Activated T-helper 1 cell treated with anti-CD3 and anti-CD28 coated beads, Interleukin-12 subunit alpha, Interleukin-12 subunit beta, Interleukin-2, Interleukin-4 antibody, amounts not matched to agents 30 ng/mL and 10 ng/mL and 1 ng/mL, durations not matched to agents 14 hours and 24 hours and 36 hours (primary cell): ENCODE measurements at regions of chr7 and their contacts with region 1.

Region 1: DNA sequence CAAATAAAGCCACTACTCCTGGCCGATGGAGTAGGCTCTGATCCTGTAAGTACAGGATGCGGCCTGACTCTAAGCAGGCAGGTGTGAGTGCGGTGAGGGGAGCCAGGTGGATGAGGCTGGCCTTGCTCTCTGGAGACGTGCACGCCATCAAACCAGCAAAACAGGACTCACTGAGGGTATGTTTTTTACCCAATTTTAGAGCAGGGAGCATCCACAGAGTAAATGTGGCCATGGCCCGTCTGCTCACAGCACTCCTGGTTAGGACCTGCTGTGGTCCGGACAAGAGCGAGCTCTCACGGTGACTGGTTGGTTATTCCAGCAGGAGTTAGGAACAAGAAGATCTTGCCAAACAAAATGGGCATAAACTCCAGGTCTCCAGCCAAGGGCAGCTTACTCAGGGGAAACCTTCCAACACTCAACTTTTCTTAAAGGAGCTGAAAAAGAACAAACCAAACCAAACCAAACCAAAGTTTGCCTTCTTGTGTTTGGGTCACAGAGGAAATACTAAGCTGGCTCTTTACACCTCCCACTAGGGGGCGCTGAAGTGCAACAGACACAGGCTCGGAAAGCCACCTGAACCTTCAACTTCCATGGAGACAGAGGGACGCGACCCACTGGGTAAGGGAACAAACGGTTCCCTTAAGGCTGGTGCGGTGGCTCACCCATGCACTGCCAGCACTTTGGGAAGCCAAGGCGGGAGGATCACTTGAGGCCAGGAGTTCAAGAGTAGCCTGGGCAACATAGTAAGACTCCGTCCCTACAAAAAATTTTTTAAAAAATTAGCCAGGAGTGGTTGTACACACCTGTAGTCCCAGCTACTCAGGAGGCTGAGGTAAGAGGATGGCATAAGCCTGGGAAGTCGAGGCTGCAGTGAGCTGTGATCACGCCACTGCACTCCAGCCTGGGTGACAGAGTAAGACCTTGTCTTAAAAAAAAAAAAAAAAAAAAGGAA is 122.4 kb downstream of the CLEC2L start:
- DNase-seq: peak; percentile 68
- H3K4me3 Mint-ChIP-seq: no peak overlapping the region
- H3K27ac Mint-ChIP-seq: no peak overlapping the region
- H3K4me1 Mint-ChIP-seq: peaks cover 65% of the 10 kb centered on the region
- H3K27me3 Mint-ChIP-seq: peaks cover 1% of the 10 kb centered on the region

Region 2: DNA sequence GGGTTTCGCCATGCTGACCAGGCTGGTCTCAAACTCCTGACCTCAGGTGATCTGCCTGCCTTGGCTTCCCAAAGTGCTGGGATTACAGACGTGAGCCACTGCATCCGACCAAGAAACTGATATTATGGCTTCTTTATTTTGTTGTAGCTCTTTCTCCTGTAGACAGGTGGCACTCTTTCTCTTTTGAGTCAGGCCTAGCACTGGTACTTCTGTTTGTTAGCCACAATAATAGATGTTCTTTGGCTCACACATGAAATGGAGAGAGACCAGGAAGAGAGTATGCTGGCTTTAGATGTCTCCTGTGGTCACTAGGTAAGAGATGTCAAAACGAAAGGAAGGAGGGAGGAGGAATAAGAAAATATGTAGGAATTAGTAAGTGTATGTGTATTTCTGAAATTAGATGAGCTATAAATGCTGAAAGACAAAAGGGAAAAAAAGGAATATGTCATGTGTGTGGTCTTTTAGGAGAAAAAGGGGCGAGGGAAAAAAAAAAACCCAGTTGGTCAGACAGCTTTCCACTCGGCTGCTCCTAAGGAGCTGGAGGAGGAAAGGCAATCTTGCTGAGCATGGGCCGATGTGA is 43.6 kb before region 1 on chr7:
- intact Hi-C with region 1: loop called (anchors 1 kb)
- DNase-seq: no peak
- H3K4me3 Mint-ChIP-seq: no peak overlapping the region
- H3K27ac Mint-ChIP-seq: no peak overlapping the region
- H3K4me1 Mint-ChIP-seq: no peaks in the 10 kb centered on the region
- H3K27me3 Mint-ChIP-seq: no peaks in the 10 kb centered on the region

Region 3: GRCh38 chr7:139673230-139673629 is 27.4 kb after region 1 on chr7:
- intact Hi-C with region 1: loop called (anchors 1 kb)
- DNase-seq: peak; percentile 20
- H3K4me3 Mint-ChIP-seq: no peak overlapping the region
- H3K27ac Mint-ChIP-seq: peak overlapping the region; percentile 19
- H3K4me1 Mint-ChIP-seq: peaks cover 51% of the 10 kb centered on the region
- H3K27me3 Mint-ChIP-seq: peaks cover 3% of the 10 kb centered on the region

Region 4: GRCh38 chr7:139696552-139696951 is 50.7 kb after region 1 on chr7:
- intact Hi-C with region 1: loop called (anchors 5 kb)
- DNase-seq: no peak
- H3K4me3 Mint-ChIP-seq: no peak overlapping the region
- H3K27ac Mint-ChIP-seq: no peak overlapping the region
- H3K4me1 Mint-ChIP-seq: peaks cover 37% of the 10 kb centered on the region
- H3K27me3 Mint-ChIP-seq: no peaks in the 10 kb centered on the region

Region 5: GRCh38 chr7:139738101-139738489 is 92.2 kb after region 1 on chr7:
- intact Hi-C with region 1: loop called (anchors 5 kb)
- DNase-seq: no peak
- H3K4me3 Mint-ChIP-seq: peak overlapping the region; percentile 11
- H3K27ac Mint-ChIP-seq: peak overlapping the region; percentile 73
- H3K4me1 Mint-ChIP-seq: peaks cover 40% of the 10 kb centered on the region
- H3K27me3 Mint-ChIP-seq: peaks cover 3% of the 10 kb centered on the region

Region 6: GRCh38 chr7:139829025-139829774 is 183.4 kb after region 1 on chr7 and contains the start of gene TBXAS1:
- intact Hi-C with region 1: loop called (anchors 5 kb)
- DNase-seq: no peak
- H3K4me3 Mint-ChIP-seq: peak within 1 kb of the TSS; percentile 63
- H3K27ac Mint-ChIP-seq: peak within 1 kb of the TSS; percentile 86
- H3K4me1 Mint-ChIP-seq: peaks cover 37% of the 10 kb centered on the region
- H3K27me3 Mint-ChIP-seq: peaks cover 16% of the 10 kb centered on the region
- total RNA-seq, gene TBXAS1: 2.4 and 3.1 TPM in 2 replicates